ENCODE measurements at regions of chr3 and their contacts with region 1.

Region 1: GRCh38 chr3:58332575-58333188 is at the start of gene PXK:
- DNase-seq: peak; percentile 60 to 81 (median 78)
- ATAC-seq: peak; percentile 91 to 94
- H3K4me3 Mint-ChIP-seq: peak within 1 kb of the TSS; percentile 94 to 100 (median 99)
- H3K27ac Mint-ChIP-seq: peak within 1 kb of the TSS; percentile 55 to 98 (median 94)
- H3K4me1 Mint-ChIP-seq: peaks cover 22 to 56% (median 39%) of the 10 kb centered on the region in 4 donors
- H3K27me3 Mint-ChIP-seq: no peaks in the 10 kb centered on the region
- polyA plus RNA-seq, gene PXK: 16.3 to 21.9 (median 21.0) TPM

Region 2: GRCh38 chr3:58082047-58082446 is 250.6 kb before region 1 on chr3:
- POLR2A ChIA-PET with region 1: no interaction called
- DNase-seq: peak in 9 of 10 donors; percentile 4 to 79 (median 54)
- ATAC-seq: peak; percentile 91 to 94
- H3K4me3 Mint-ChIP-seq: peak overlapping the region; percentile 58 to 86 (median 72)
- H3K27ac Mint-ChIP-seq: peak overlapping the region; percentile 84 to 97 (median 93)
- H3K4me1 Mint-ChIP-seq: peaks cover 38 to 75% (median 65%) of the 10 kb centered on the region in 4 donors
- H3K27me3 Mint-ChIP-seq: no peaks in the 10 kb centered on the region

Region 3: DNA sequence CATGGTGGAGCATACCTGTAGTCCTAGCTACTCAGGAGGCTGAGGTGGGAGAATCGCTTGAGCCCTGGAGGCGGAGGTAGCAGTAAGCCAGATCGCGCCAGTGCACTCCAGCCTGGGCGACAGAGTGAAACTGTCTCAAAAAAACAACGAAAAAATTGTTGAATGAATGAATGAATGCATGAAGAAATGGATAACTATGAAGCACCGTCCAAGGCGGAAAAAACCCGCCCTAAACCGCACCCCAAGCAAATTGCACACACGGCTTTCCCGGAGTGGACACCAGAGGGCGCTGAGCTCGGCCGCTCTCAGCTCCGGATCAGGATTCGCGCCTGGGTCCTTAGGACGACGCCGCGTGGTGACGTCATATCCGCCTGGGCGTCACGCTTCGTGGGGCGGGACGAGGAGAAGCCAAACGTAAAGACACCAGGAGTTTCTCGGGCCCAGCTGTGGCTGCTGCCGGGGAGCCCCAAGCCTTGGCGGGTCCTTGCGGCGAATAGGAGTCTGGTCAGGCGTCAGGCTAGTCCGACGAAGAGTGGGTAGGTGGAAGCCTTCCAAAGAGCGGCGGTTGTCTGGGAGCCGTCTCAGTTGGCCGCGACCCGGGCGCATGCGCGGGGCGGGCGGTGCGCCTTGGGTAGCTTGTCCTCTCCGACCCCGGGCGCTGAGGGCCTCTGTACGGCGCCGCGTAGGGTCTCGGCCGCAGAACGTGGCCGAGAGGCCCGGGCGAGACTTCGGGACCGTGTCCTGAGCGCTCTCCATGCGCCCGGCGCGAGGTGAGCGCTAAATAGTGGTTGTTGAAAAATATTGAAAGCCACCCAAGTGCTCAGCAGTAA is 26.6 kb before region 1 on chr3 and contains the starts of genes HTD2 and RPP14:
- POLR2A ChIA-PET with region 1: interaction called, 13 read pairs
- DNase-seq: peak; percentile 95 to 100 (median 99)
- ATAC-seq: peak; percentile 86 to 90
- H3K4me3 Mint-ChIP-seq: peak within 1 kb of the TSS; percentile 92 to 100 (median 98)
- H3K27ac Mint-ChIP-seq: peak within 1 kb of the TSS; percentile 97 to 100 (median 100)
- H3K4me1 Mint-ChIP-seq: peaks cover 11 to 44% (median 39%) of the 10 kb centered on the region in 4 donors
- H3K27me3 Mint-ChIP-seq: peaks cover 3 to 20% (median 11%) of the 10 kb centered on the region in 5 donors
- polyA plus RNA-seq, gene HTD2: 17.4 to 31.2 (median 23.7) TPM
- polyA plus RNA-seq, gene RPP14: 7.5 to 8.5 (median 7.8) TPM

Region 4: DNA sequence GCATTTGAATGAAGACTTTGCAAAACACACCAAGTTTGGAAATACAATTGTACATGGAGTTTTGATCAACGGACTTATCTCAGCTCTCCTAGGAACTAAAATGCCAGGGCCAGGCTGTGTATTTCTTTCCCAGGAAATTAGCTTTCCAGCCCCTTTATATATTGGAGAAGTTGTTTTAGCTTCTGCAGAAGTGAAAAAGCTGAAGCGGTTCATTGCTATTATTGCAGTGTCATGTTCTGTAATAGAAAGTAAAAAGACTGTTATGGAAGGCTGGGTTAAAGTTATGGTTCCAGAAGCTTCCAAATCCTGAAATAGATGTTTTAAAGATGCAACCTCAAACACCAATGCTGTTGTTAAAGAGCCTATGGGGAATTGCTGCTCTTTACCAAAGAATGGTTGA is 14.9 kb before region 1 on chr3:
- POLR2A ChIA-PET with region 1: no interaction called
- DNase-seq: no peak
- ATAC-seq: no peak
- H3K4me3 Mint-ChIP-seq: no peak overlapping the region
- H3K27ac Mint-ChIP-seq: peak overlapping the region in 1 of 10 donors; percentile 15
- H3K4me1 Mint-ChIP-seq: peaks cover 4 to 16% (median 8%) of the 10 kb centered on the region in 4 donors
- H3K27me3 Mint-ChIP-seq: no peaks in the 10 kb centered on the region

Region 5: DNA sequence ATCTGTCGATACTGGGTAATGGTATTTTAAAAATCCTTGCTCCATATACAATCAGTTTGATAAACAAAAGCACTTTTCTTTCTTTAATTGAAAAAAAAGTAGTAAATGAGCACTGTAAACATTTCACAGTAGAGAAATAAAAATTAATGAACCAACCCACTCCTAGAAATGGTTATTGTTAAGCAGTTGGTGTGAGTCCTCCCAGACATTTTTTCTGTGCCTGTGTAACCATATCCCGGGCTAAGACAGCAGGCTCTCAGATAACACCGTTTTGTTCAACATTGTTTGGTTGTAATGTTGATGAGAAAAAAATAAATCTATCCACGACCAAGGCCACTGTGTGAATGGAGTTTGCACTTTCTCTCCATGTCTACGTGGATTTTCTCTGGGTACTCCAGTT is 42.6 kb after region 1 on chr3:
- POLR2A ChIA-PET with region 1: no interaction called
- DNase-seq: no peak
- ATAC-seq: no peak
- H3K4me3 Mint-ChIP-seq: no peak overlapping the region
- H3K27ac Mint-ChIP-seq: no peak overlapping the region
- H3K4me1 Mint-ChIP-seq: peaks cover 0 to 6% (median 2%) of the 10 kb centered on the region in 4 donors
- H3K27me3 Mint-ChIP-seq: no peaks in the 10 kb centered on the region

Measured in naive thymus-derived CD8-positive, alpha-beta T cell (primary cell).